AG04449 (cell line): ENCODE measurements at regions of chr6 and their contacts with region 1.

Region 1: GRCh38 chr6:81894788-81895271 is 142.3 kb upstream of the TENT5A start:
- DNase-seq: no peak
- H3K4me3 ChIP-seq: no peak overlapping the region
- CTCF ChIP-seq: no peak

Region 2: DNA sequence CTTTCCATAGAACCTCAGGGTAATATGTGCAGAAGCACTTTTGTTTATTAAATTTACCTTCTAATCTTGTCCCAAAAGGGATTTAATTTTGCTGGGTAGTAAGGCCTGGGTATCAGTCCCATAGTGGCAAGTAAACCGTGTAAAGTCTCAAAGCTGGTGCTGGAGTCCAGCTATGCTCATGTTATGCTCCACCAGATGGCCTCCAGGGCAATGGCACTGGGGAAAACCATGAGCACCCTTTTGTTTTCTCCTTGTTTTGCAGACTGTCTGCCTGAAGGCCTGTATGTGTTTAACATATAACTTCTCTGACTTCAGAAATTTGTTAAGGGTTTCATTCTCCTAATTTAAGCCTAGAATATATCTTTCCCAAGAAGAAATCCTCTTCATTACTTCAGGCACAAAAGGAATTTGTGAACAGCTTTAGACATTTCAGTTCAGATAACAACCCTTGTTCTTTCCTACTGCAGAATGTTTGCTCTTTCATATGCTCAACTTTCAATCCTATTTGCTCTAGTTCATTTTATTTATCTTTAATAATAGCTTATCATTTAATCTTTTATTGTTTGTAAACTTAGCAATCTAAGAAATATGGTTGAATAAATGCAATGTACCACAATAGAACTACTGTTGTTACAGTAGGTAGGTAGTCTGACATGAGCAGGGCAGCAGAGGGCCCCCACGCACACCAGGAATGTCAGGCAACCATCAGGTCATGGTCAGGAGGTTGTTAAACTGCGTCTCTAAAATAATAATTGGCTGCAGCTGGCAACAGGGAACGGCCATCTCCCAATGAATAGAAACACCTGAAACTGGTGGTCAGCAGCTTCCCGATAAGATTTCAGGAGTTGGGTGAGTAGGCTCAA is 305.1 kb before region 1 on chr6:
- CTCF ChIA-PET with region 1: no interaction called
- POLR2A ChIA-PET with region 1: no interaction called
- DNase-seq: no peak
- H3K4me3 ChIP-seq: no peak overlapping the region
- CTCF ChIP-seq: no peak

Region 3: GRCh38 chr6:81766482-81767069 is 128.3 kb before region 1 on chr6:
- CTCF ChIA-PET with region 1: interaction called, 3 read pairs
- POLR2A ChIA-PET with region 1: interaction called, 13 read pairs
- DNase-seq: peak; percentile 81
- H3K4me3 ChIP-seq: no peak overlapping the region
- CTCF ChIP-seq: no peak

Region 4: GRCh38 chr6:81997091-81997926 is 102.5 kb after region 1 on chr6:
- CTCF ChIA-PET with region 1: no interaction called
- POLR2A ChIA-PET with region 1: interaction called, 10 read pairs
- DNase-seq: peak; percentile 79
- H3K4me3 ChIP-seq: no peak overlapping the region
- CTCF ChIP-seq: no peak

Region 5: GRCh38 chr6:82138075-82138791 is 243.4 kb after region 1 on chr6:
- CTCF ChIA-PET with region 1: no interaction called
- POLR2A ChIA-PET with region 1: no interaction called
- DNase-seq: no peak
- H3K4me3 ChIP-seq: no peak overlapping the region
- CTCF ChIP-seq: no peak